ENCODE measurements at regions of chr4 and their contacts with region 1.

Region 1: GRCh38 chr4:89906777-89907521 is 12.3 kb downstream of the MMRN1 start:
- DNase-seq: no peak
- ATAC-seq: no peak
- H3K4me3 ChIP-seq: no peak overlapping the region
- H3K27ac ChIP-seq: no peak overlapping the region
- H3K4me1 ChIP-seq: no peaks in the 10 kb centered on the region
- H3K27me3 ChIP-seq: peaks cover 50% of the 10 kb centered on the region
- CTCF ChIP-seq: no peak

Region 2: DNA sequence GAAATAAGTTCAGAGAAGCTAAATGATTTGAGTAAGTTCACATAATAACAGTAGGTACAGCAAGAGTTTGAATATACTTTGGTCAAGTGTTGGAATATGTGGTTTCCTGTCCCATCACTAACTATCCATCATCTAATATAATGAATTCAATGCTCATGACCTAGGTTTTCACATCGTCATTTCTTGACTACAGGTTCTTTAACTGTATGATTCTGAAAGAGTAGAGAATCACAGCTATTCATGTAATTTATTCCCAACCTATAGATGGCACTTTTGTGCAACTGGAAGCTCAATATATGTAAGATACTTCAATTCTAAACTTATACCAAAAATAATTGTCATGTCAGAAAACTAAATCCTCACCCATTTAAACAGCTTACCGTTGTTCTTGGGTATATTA is 742.5 kb before region 1 on chr4:
- CTCF ChIA-PET with region 1: no interaction called
- POLR2A ChIA-PET with region 1: no interaction called
- intact Hi-C with region 1: loop called (anchors 10 kb)
- DNase-seq: peak; percentile 20
- ATAC-seq: no peak
- H3K4me3 ChIP-seq: no peak overlapping the region
- H3K27ac ChIP-seq: no peak overlapping the region
- H3K4me1 ChIP-seq: no peaks in the 10 kb centered on the region
- H3K27me3 ChIP-seq: peaks cover 21% of the 10 kb centered on the region
- CTCF ChIP-seq: peak; percentile 38; the same call in 1 of the 2 replicates

Region 3: DNA sequence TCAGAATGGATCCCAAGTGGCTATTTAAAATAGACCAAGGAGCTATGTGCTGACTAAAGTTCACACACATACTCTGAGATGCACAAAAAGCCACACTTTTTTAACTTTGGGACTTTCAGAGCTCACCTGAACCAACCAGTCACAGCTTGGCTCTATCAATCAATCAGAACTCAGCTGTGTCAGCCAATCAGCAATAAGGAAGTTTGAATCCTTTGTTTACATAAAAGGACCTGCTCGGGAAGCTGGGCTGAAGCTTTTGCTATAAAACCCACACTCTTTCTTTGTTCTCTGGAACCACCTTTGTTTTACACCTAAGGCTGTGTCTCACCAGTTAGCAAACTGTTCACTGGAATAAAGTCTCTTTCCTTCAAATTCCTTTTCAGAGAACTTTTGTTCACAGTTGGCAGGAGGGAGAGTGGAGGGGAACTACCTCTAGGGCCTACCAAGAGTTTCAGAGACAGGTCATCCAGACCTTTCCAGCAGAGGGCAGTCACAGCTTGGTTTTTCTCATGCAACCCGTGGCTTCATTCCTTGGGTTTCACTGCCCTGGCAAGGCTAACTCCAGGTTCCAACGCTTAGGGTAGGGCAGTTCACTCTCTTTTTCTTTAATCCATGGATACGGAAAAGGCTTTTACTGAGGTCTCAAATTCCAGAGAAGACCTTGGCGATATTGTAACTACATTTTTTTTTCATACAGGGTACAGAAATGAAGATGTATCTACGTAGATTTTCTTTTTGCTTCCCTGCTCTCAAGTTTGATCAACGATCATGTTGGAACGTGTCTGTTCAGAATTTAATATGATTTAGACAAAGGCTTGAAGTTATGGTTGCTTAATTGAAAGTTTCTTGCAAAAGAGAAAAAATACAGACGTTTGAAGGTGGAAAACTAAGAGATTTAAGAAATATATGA is 680.0 kb before region 1 on chr4:
- CTCF ChIA-PET with region 1: no interaction called
- POLR2A ChIA-PET with region 1: no interaction called
- intact Hi-C with region 1: loop called (anchors 5 kb)
- DNase-seq: peak; percentile 79
- ATAC-seq: peak; percentile 95
- H3K4me3 ChIP-seq: no peak overlapping the region
- H3K27ac ChIP-seq: no peak overlapping the region
- H3K4me1 ChIP-seq: 0 out of 2 replicates have a peak, but pooled peaks cover 3% of the 10 kb centered on the region
- H3K27me3 ChIP-seq: no peaks in the 10 kb centered on the region
- CTCF ChIP-seq: peak; percentile 74

Region 4: GRCh38 chr4:89434364-89434988 is 472.5 kb before region 1 on chr4:
- CTCF ChIA-PET with region 1: no interaction called
- POLR2A ChIA-PET with region 1: no interaction called
- intact Hi-C with region 1: loop called (anchors 5 kb)
- DNase-seq: peak; percentile 31
- ATAC-seq: peak; percentile 46; the same call in 1 of the 2 replicates
- H3K4me3 ChIP-seq: no peak overlapping the region
- H3K27ac ChIP-seq: no peak overlapping the region
- H3K4me1 ChIP-seq: no peaks in the 10 kb centered on the region
- H3K27me3 ChIP-seq: peaks cover 17% of the 10 kb centered on the region
- CTCF ChIP-seq: peak; percentile 71

Region 5: DNA sequence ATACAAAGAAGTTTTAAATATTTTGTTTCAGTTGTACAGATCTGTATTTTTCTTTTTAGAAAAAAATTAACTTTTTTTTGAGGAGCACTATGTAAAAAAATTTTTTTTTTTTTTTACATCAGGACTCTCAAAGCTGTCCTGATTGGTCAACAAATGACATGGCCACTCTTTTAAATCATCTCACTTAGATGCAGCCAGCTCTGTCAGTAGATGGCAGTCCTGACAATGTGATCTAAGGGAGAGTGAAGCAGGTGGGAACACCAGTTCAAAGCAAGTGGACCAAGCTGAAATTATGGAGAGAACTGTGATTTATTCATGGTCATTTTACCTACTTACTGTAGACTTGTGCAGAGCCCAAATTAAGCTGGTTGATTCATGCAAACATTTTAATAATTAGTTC is 424.7 kb before region 1 on chr4:
- CTCF ChIA-PET with region 1: no interaction called
- POLR2A ChIA-PET with region 1: no interaction called
- intact Hi-C with region 1: loop called (anchors 5 kb)
- DNase-seq: peak; percentile 48
- ATAC-seq: peak; percentile 84
- H3K4me3 ChIP-seq: no peak overlapping the region
- H3K27ac ChIP-seq: no peak overlapping the region
- H3K4me1 ChIP-seq: no peaks in the 10 kb centered on the region
- H3K27me3 ChIP-seq: no peaks in the 10 kb centered on the region
- CTCF ChIP-seq: peak; percentile 55

Region 6: GRCh38 chr4:89598602-89599001 is 308.3 kb before region 1 on chr4:
- CTCF ChIA-PET with region 1: no interaction called
- POLR2A ChIA-PET with region 1: no interaction called
- intact Hi-C with region 1: loop called (anchors 5 kb)
- DNase-seq: peak; percentile 29
- ATAC-seq: no peak
- H3K4me3 ChIP-seq: no peak overlapping the region
- H3K27ac ChIP-seq: no peak overlapping the region
- H3K4me1 ChIP-seq: no peaks in the 10 kb centered on the region
- H3K27me3 ChIP-seq: peaks cover 24% of the 10 kb centered on the region; the same call in 1 of the 2 replicates
- CTCF ChIP-seq: peak; percentile 51

Region 7: DNA sequence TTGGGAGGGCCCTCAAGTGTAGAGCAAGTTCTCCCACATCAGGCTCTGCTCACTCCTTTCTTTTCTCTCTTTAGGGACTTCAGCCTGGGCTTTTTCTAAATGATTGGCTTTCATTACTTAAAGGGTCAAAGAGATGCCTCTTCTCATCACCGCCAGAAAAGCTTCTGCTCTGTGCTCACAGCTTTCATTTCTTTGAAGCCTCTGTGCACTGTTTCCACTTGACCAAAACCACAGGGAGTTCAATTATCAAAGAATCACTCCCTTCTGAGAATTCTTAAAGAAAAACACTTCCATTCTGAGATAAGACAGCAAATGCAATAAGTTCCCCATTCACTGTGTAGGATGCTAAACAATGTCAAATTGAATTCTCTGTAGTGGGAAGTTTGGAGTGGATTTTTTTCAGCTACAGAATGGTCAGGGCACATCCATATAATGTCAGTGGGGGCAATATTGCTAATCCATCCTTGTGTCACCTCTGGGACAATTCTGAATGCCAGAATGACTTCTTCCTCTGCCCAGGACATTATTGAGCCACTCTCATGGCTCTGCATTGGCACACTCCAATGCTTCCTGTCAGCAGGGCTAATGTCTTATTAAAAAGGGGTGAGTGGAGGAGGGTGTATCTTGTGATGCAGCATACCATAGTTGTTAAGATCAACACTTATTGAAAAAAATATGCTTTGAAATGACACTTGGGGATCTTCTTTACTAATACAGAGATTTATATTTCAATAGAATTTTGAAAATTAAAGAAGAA is 287.6 kb before region 1 on chr4:
- CTCF ChIA-PET with region 1: no interaction called
- POLR2A ChIA-PET with region 1: no interaction called
- intact Hi-C with region 1: no loop called
- DNase-seq: no peak
- ATAC-seq: no peak
- H3K4me3 ChIP-seq: no peak overlapping the region
- H3K27ac ChIP-seq: no peak overlapping the region
- H3K4me1 ChIP-seq: no peaks in the 10 kb centered on the region
- H3K27me3 ChIP-seq: peaks cover 28% of the 10 kb centered on the region; the same call in 1 of the 2 replicates
- CTCF ChIP-seq: no peak

Measured in PC-3 (cell line).